PC-9 (cell line): ENCODE measurements at regions of chr3 and their contacts with region 1.

Region 1: DNA sequence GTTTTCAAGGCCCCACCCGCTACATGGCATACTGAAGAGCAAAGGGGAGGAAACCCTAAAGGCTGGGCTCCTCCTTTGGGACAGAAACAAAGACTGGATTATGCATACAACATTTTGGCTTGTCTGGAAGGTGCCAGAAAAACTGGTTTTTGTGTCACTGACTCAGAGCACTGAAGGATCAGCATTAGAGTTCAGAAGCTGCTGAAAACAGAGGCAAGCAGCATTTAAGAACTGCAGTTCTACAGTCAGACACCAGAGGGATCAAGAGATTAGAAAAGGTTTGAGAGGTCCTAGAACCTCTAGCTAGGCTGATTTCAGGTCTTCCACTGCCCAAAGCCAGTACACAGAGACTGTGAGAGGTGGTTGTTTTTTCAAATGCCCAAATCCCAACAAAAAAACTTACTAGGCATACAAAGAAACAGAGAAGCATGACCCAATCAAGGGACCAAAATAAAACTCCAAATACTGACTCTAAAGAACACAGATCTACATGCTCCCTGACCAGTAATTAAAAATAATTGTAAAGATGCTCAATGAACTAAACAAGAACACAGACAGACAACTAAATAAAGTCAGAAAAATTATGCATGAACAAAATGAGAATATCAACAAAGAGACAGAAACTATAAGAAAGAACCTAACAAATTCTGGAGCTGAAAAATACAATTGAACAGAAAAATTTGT is 91.2 kb downstream of the SENP2 start:
- DNase-seq: peak; percentile 72 to 95
- H3K4me3 ChIP-seq: no peak overlapping the region
- H3K27ac ChIP-seq: peak overlapping the region; percentile 36
- H3K4me1 ChIP-seq: peaks cover 4% of the 10 kb centered on the region
- H3K27me3 ChIP-seq: no peaks in the 10 kb centered on the region
- CTCF ChIP-seq: peak; percentile 97

Region 2: GRCh38 chr3:185968168-185968567 is 290.9 kb after region 1 on chr3:
- CTCF ChIA-PET with region 1: no interaction called
- POLR2A ChIA-PET with region 1: no interaction called
- intact Hi-C with region 1: no loop called
- DNase-seq: no peak
- H3K4me3 ChIP-seq: no peak overlapping the region
- H3K27ac ChIP-seq: no peak overlapping the region
- H3K4me1 ChIP-seq: peaks cover 26% of the 10 kb centered on the region
- H3K27me3 ChIP-seq: no peaks in the 10 kb centered on the region
- CTCF ChIP-seq: no peak

Region 3: DNA sequence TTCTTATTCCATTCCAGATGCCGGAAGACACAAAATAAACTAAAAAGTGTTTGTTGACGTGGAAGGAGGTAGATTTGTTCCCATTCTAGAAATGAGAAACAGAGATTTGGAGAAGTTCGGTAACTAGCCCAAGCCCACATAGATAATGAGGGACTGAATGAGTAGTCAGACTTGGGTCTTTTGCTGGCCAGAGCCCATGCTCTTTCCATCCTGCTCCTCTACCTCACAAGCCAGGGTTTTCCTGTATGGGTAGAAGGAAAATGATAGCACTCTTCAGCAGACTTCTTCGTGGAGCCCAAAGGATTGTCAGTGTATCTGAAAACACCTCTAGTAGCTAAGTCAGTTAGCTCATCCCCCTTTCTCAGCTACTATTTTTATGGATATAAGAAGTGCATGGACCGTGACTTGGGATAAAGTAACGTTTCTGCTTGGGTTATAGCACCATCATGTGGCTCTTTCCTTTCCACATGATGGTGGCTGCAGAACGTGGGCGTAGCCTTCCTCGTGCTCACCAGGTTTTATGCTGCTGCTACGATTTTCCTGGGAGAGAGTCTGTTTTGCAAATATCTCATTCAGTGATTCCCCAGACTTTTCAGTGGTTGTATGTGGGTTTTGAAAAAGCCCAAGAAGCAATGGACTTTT is 600.1 kb after region 1 on chr3:
- CTCF ChIA-PET with region 1: interaction called, 3 read pairs
- POLR2A ChIA-PET with region 1: no interaction called
- intact Hi-C with region 1: loop called (anchors 1 kb)
- DNase-seq: peak; percentile 50 to 53
- H3K4me3 ChIP-seq: no peak overlapping the region
- H3K27ac ChIP-seq: no peak overlapping the region
- H3K4me1 ChIP-seq: no peaks in the 10 kb centered on the region
- H3K27me3 ChIP-seq: peaks cover 62% of the 10 kb centered on the region
- CTCF ChIP-seq: peak; percentile 70